Activated T-helper 2 cell treated with anti-CD3 and anti-CD28 coated beads, Interferon-gamma antibody, Interleukin-2, Interleukin-4, amounts not matched to agents 10 μg/mL and 5 μg/mL and 100 μg/mL, durations not matched to agents 14 hours and 24 hours and 36 hours (primary cell): ENCODE measurements at regions of chr5 and their contacts with region 1.

Region 1: GRCh38 chr5:180718810-180719453 is 20.9 kb downstream of the OR2Y1 start:
- DNase-seq: no peak
- H3K4me3 Mint-ChIP-seq: no peak overlapping the region
- H3K27ac Mint-ChIP-seq: no peak overlapping the region
- H3K4me1 Mint-ChIP-seq: peaks cover 13% of the 10 kb centered on the region
- H3K27me3 Mint-ChIP-seq: peaks cover 20% of the 10 kb centered on the region

Region 2: GRCh38 chr5:180532268-180532667 is 186.7 kb before region 1 on chr5:
- intact Hi-C with region 1: no loop called
- DNase-seq: no peak
- H3K4me3 Mint-ChIP-seq: no peak overlapping the region
- H3K27ac Mint-ChIP-seq: no peak overlapping the region
- H3K4me1 Mint-ChIP-seq: peaks cover 7% of the 10 kb centered on the region
- H3K27me3 Mint-ChIP-seq: no peaks in the 10 kb centered on the region

Region 3: GRCh38 chr5:180670586-180671359 is 48.2 kb before region 1 on chr5:
- intact Hi-C with region 1: loop called (anchors 5 kb)
- DNase-seq: no peak
- H3K4me3 Mint-ChIP-seq: no peak overlapping the region
- H3K27ac Mint-ChIP-seq: no peak overlapping the region
- H3K4me1 Mint-ChIP-seq: peaks cover 5% of the 10 kb centered on the region
- H3K27me3 Mint-ChIP-seq: peaks cover 24% of the 10 kb centered on the region

Region 4: GRCh38 chr5:180689071-180689694 is 29.7 kb before region 1 on chr5:
- intact Hi-C with region 1: loop called (anchors 2 kb)
- DNase-seq: no peak
- H3K4me3 Mint-ChIP-seq: peak overlapping the region; percentile 20
- H3K27ac Mint-ChIP-seq: peak overlapping the region; percentile 2
- H3K4me1 Mint-ChIP-seq: peaks cover 25% of the 10 kb centered on the region
- H3K27me3 Mint-ChIP-seq: peaks cover 13% of the 10 kb centered on the region

Region 5: GRCh38 chr5:180736536-180736935 is 17.6 kb after region 1 on chr5:
- intact Hi-C with region 1: no loop called
- DNase-seq: no peak
- H3K4me3 Mint-ChIP-seq: no peak overlapping the region
- H3K27ac Mint-ChIP-seq: no peak overlapping the region
- H3K4me1 Mint-ChIP-seq: no peaks in the 10 kb centered on the region
- H3K27me3 Mint-ChIP-seq: peaks cover 20% of the 10 kb centered on the region